CD4-positive, alpha-beta T cell (primary cell): ENCODE measurements at regions of chr4 and their contacts with region 1.

Region 1: GRCh38 chr4:115054839-115055238 is 58.6 kb downstream of the NDST4 start:
- DNase-seq: no peak
- ATAC-seq: no peak
- H3K4me3 ChIP-seq: no peak overlapping the region
- H3K4me3 Mint-ChIP-seq: no peak overlapping the region
- H3K27ac ChIP-seq: no peak overlapping the region
- H3K27ac Mint-ChIP-seq: no peak overlapping the region
- H3K4me1 ChIP-seq: no peaks in the 10 kb centered on the region
- H3K4me1 Mint-ChIP-seq: no peaks in the 10 kb centered on the region
- H3K27me3 ChIP-seq: no peaks in the 10 kb centered on the region
- H3K27me3 Mint-ChIP-seq: no peaks in the 10 kb centered on the region
- CTCF ChIP-seq: no peak

Region 2: GRCh38 chr4:115101674-115102073 is 46.8 kb after region 1 on chr4:
- CTCF ChIA-PET with region 1: no interaction called
- POLR2A ChIA-PET with region 1: no interaction called
- intact Hi-C with region 1: loop called in 1 of 2 experiments (anchors 5 kb)
- DNase-seq: no peak
- ATAC-seq: no peak
- H3K4me3 ChIP-seq: no peak overlapping the region
- H3K4me3 Mint-ChIP-seq: no peak overlapping the region
- H3K27ac ChIP-seq: no peak overlapping the region
- H3K27ac Mint-ChIP-seq: no peak overlapping the region
- H3K4me1 ChIP-seq: no peaks in the 10 kb centered on the region
- H3K4me1 Mint-ChIP-seq: no peaks in the 10 kb centered on the region
- H3K27me3 ChIP-seq: no peaks in the 10 kb centered on the region
- H3K27me3 Mint-ChIP-seq: no peaks in the 10 kb centered on the region
- CTCF ChIP-seq: no peak